ENCODE measurements at regions of chr6 and their contacts with region 1.

Region 1: DNA sequence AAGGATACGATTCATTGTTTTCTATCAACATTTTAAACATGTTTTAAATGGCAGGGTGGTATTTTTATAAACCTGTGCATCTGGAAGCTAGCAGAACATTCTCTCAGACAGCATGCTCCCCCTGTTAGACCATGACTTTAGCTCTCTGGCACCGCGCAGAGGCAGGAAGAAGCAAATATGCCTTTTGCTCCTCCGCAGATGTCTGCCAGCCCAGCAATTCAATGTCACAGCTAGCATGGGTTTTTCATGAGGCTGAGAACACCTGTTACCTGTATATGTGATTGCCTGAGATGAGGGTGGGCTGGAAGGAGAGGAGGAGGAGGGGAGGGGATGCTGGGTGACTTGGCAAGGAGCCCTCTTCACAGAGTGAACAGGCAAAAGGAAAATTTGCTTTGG is 6.7 kb downstream of the MTCH1 start:
- DNase-seq: peak; percentile 34
- H3K4me3 ChIP-seq: no peak overlapping the region
- H3K27ac ChIP-seq: no peak overlapping the region
- H3K4me1 ChIP-seq: peaks cover 2% of the 10 kb centered on the region
- H3K27me3 ChIP-seq: no peaks in the 10 kb centered on the region
- CTCF ChIP-seq: peak; percentile 23

Region 2: GRCh38 chr6:36897609-36898008 is 81.7 kb before region 1 on chr6:
- intact Hi-C with region 1: loop called (anchors 5 kb)
- DNase-seq: no peak
- H3K4me3 ChIP-seq: no peak overlapping the region
- H3K27ac ChIP-seq: no peak overlapping the region
- H3K4me1 ChIP-seq: no peaks in the 10 kb centered on the region
- H3K27me3 ChIP-seq: no peaks in the 10 kb centered on the region
- CTCF ChIP-seq: no peak

Measured in colonic mucosa (tissue), 4 donors.